ENCODE measurements at regions of chr15 and their contacts with region 1.

Region 1: DNA sequence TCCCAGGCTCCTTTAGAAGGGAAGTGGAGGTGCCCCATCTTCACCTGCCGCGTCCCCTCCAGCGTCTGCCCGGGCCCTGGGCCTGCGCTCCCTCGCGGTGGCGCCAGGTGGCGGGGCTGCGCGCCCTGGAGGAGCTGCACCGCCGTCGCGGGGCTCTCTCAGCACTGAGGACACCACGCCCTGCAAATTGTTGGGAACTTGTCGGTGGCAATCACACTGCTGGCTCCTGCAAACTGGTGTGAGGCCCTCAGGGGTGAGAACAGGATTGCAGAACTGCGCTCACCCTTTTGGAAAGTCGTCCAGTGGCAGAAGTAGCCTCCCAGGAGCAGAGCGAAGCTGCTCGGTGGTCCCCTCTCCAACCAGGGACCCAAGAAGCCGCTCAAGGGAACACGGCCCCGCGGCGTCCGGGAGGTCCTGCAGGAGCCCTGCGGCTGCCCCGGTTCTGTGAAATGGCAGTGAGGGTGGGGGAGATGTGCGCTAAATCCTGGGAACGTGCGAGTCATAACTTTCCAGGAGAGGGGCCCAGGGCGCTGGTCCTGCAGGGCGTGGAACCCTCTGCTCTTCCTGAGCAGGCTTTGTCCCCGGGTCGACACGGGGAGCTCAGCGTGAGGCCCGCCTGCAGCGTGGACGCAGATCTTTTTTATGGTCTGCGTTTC is 995 bp upstream of the LRRK1 start:
- DNase-seq: peak; percentile 84
- ATAC-seq: peak; percentile 94
- H3K4me3 Mint-ChIP-seq: peak overlapping the region; percentile 66
- H3K27ac Mint-ChIP-seq: peak overlapping the region; percentile 0
- H3K4me1 Mint-ChIP-seq: peaks cover 15% of the 10 kb centered on the region
- H3K27me3 Mint-ChIP-seq: peaks cover 55% of the 10 kb centered on the region

Region 2: GRCh38 chr15:99592145-99592791 is 1325.9 kb before region 1 on chr15:
- CTCF ChIA-PET with region 1: no interaction called
- POLR2A ChIA-PET with region 1: no interaction called
- intact Hi-C with region 1: no loop called
- DNase-seq: no peak
- ATAC-seq: no peak
- H3K4me3 Mint-ChIP-seq: no peak overlapping the region
- H3K27ac Mint-ChIP-seq: no peak overlapping the region
- H3K4me1 Mint-ChIP-seq: peaks cover 39% of the 10 kb centered on the region
- H3K27me3 Mint-ChIP-seq: no peaks in the 10 kb centered on the region

Region 3: GRCh38 chr15:100008258-100008657 is 909.9 kb before region 1 on chr15:
- CTCF ChIA-PET with region 1: no interaction called
- POLR2A ChIA-PET with region 1: no interaction called
- intact Hi-C with region 1: no loop called
- DNase-seq: no peak
- ATAC-seq: no peak
- H3K4me3 Mint-ChIP-seq: no peak overlapping the region
- H3K27ac Mint-ChIP-seq: no peak overlapping the region
- H3K4me1 Mint-ChIP-seq: no peaks in the 10 kb centered on the region
- H3K27me3 Mint-ChIP-seq: no peaks in the 10 kb centered on the region

Region 4: GRCh38 chr15:100627789-100628395 is 290.3 kb before region 1 on chr15:
- CTCF ChIA-PET with region 1: interaction called, 5 read pairs
- POLR2A ChIA-PET with region 1: no interaction called
- intact Hi-C with region 1: loop called (anchors 2 kb)
- DNase-seq: peak; percentile 72
- ATAC-seq: peak; percentile 84
- H3K4me3 Mint-ChIP-seq: no peak overlapping the region
- H3K27ac Mint-ChIP-seq: no peak overlapping the region
- H3K4me1 Mint-ChIP-seq: peaks cover 12% of the 10 kb centered on the region
- H3K27me3 Mint-ChIP-seq: no peaks in the 10 kb centered on the region

Region 5: DNA sequence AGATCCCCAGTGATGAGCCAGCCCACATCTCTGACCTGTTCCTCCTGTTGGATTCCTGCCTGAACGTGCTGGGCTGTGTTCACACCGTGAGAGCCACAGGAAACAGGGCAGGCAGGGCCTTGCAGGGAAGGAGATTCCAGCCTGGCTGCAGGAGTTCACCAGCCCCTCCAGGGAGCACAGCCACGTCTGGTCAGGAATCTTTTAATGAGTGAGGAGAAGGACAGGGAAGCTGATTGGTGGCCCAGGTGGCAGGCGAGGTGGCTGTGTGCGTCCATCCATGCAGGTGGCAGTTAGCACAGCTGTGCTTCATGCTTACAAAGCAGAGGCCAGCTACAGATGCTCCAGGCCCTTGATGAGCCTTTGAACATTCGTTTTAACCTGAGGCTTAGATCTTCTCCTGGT is 11.5 kb after region 1 on chr15:
- CTCF ChIA-PET with region 1: interaction called, 12 read pairs
- POLR2A ChIA-PET with region 1: no interaction called
- intact Hi-C with region 1: no loop called
- DNase-seq: no peak
- ATAC-seq: no peak
- H3K4me3 Mint-ChIP-seq: no peak overlapping the region
- H3K27ac Mint-ChIP-seq: no peak overlapping the region
- H3K4me1 Mint-ChIP-seq: no peaks in the 10 kb centered on the region
- H3K27me3 Mint-ChIP-seq: peaks cover 10% of the 10 kb centered on the region

Measured in activated CD4-positive, alpha-beta T cell treated with anti-CD3 and anti-CD28 coated beads for 36 hours (primary cell).